Naive thymus-derived CD4-positive, alpha-beta T cell (primary cell): ENCODE measurements at regions of chr4 and their contacts with region 1.

Region 1: GRCh38 chr4:105146276-105147015 is at the start of gene TET2:
- DNase-seq: peak; percentile 66 to 85 (median 78)
- ATAC-seq: peak; percentile 89
- H3K4me3 ChIP-seq: peak within 1 kb of the TSS; percentile 97
- H3K4me3 Mint-ChIP-seq: peak within 1 kb of the TSS; percentile 95 to 100 (median 100)
- H3K27ac ChIP-seq: peak within 1 kb of the TSS; percentile 80
- H3K27ac Mint-ChIP-seq: peak within 1 kb of the TSS; percentile 92 to 100 (median 98)
- H3K4me1 ChIP-seq: peaks cover 0 to 6% of the 10 kb centered on the region in 2 donors
- H3K4me1 Mint-ChIP-seq: peaks cover 31 to 41% (median 34%) of the 10 kb centered on the region in 7 donors
- H3K27me3 ChIP-seq: no peaks in the 10 kb centered on the region
- H3K27me3 Mint-ChIP-seq: peaks cover 0 to 3% (median 0%) of the 10 kb centered on the region in 5 donors
- total RNA-seq, gene TET2: 15.2 to 78.4 (median 32.2) TPM

Region 2: DNA sequence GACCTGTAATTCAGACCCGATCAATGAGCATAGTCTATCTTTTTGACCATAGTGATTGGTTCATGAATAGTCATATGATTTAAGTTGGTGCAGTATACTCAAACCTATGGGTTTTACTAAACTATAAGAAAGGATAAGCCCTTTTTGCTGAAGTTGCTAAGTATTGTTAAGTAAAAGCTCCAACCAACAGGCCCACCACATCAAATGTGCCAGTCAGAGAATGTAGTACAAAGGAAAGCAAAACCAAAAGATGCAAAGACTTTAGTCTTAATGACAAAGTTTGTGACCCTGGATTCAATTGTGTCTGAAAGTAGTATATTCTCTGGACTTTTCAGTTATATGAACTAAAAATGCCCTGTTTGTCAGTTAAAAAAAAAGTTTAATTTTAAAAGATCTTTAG is 207.8 kb before region 1 on chr4:
- CTCF ChIA-PET with region 1: no interaction called
- POLR2A ChIA-PET with region 1: no interaction called
- intact Hi-C with region 1: loop called in 1 of 2 experiments (anchors 2 kb)
- DNase-seq: peak in 5 of 9 donors; percentile 3 to 47 (median 25)
- ATAC-seq: peak; percentile 77
- H3K4me3 ChIP-seq: no peak overlapping the region
- H3K4me3 Mint-ChIP-seq: peak overlapping the region in 1 of 10 donors; percentile 47
- H3K27ac ChIP-seq: peak overlapping the region; percentile 32
- H3K27ac Mint-ChIP-seq: peak overlapping the region in 5 of 9 donors; percentile 15 to 64 (median 25)
- H3K4me1 ChIP-seq: peaks cover 0 to 3% of the 10 kb centered on the region in 2 donors
- H3K4me1 Mint-ChIP-seq: peaks cover 0 to 17% (median 11%) of the 10 kb centered on the region in 7 donors
- H3K27me3 ChIP-seq: no peaks in the 10 kb centered on the region
- H3K27me3 Mint-ChIP-seq: peaks cover 0 to 2% (median 0%) of the 10 kb centered on the region in 5 donors

Region 3: DNA sequence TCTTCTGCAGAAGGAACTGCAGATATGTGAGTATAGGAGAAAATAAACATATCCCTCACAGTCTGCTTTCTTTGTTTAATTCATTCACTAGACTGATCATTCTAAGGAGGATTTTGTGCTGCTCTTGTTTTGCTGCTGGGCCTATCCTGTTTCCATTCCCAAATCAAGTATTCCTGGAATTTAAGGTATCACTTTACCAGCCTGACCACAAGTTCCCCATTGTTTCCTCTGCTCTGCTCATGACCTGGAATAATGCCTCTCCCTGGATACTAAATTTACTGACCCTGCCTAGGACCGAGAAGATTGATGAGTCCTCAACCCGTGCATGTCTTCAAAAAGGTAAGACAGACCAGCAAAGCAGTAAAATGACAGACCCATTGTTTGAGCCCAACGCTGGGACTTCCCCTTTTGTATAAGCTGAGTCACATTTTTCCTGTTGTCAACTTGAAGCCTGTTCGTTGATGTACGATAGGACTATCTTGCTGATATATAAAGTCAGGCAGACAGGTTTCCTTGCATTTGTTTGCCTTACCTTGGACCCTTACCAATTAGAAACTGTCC is 85.2 kb before region 1 on chr4:
- CTCF ChIA-PET with region 1: no interaction called
- POLR2A ChIA-PET with region 1: no interaction called
- intact Hi-C with region 1: loop called in 1 of 2 experiments (anchors 2 kb)
- DNase-seq: peak in 1 of 9 donors; percentile 39
- ATAC-seq: peak; percentile 49
- H3K4me3 ChIP-seq: no peak overlapping the region
- H3K4me3 Mint-ChIP-seq: peak overlapping the region in 5 of 10 donors; percentile 4 to 64 (median 34)
- H3K27ac ChIP-seq: no peak overlapping the region
- H3K27ac Mint-ChIP-seq: peak overlapping the region in 3 of 9 donors; percentile 14 to 85 (median 26)
- H3K4me1 ChIP-seq: no peaks in the 10 kb centered on the region
- H3K4me1 Mint-ChIP-seq: peaks cover 10 to 30% (median 11%) of the 10 kb centered on the region in 7 donors
- H3K27me3 ChIP-seq: no peaks in the 10 kb centered on the region
- H3K27me3 Mint-ChIP-seq: no peaks in the 10 kb centered on the region

Region 4: DNA sequence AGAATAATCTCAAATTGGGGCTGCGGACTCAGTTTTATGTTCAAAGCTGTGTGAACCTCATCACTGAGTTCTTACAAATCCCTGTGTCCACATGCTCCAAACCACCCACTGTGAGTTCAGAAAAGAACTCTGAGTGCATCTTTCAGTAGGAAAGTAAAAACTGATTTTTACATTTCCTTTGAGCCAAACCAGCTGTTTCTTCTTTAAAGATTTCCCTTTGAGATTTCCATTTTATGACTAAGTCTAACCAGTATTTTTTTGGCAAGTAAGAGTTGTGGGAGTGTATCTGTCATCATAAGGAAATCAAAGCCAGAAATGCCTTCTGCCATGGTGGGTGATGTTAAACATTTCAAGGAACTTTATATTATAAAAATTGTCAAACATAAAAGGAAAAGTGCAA is 100.3 kb after region 1 on chr4:
- CTCF ChIA-PET with region 1: no interaction called
- POLR2A ChIA-PET with region 1: no interaction called
- intact Hi-C with region 1: loop called in 1 of 2 experiments (anchors 5 kb)
- DNase-seq: no peak
- ATAC-seq: no peak
- H3K4me3 ChIP-seq: no peak overlapping the region
- H3K4me3 Mint-ChIP-seq: no peak overlapping the region
- H3K27ac ChIP-seq: no peak overlapping the region
- H3K27ac Mint-ChIP-seq: no peak overlapping the region
- H3K4me1 ChIP-seq: no peaks in the 10 kb centered on the region
- H3K4me1 Mint-ChIP-seq: peaks cover 0 to 5% (median 0%) of the 10 kb centered on the region in 7 donors
- H3K27me3 ChIP-seq: no peaks in the 10 kb centered on the region
- H3K27me3 Mint-ChIP-seq: no peaks in the 10 kb centered on the region

Region 5: DNA sequence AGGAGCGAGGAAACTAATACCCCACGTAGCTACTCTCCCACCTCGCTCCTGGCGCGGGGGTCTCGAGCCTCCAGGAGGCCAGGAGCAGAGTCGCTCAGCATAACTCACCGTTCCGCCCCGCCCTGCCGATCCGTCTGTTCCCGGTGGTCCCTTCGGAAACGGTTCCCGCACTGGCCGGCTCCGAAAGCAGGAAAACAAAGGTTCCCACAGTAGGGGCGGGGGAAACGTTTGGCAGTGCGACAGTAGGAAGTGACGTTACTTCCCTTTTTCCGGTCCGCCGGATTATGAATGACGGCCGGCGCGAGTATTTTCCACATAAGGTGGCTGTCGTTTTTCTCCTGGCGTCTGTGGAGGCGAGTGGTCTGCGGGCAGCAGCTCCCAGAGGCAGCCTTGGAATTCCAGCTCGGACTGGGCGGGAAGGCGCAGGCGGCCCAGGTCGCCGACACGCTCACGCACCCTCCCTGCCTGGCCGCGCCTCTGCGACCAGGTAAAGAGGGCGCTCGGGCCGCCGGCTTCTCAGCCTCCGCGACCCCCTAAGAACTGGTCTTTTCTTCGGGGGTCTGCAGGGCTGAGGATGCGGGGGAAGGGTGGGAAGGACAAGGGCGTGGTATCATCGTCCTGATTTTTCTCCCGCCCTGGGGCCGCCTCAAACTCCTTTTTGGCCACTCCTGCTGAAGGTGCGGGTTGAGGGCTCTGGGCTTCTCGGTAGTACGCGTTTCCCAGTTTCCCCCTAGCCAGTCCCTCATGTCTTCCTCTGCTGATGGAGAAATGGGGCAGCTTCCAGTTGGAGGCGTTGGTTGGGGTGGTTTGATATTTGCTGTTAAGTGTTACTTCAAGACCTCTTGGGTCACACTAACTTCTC is 562.3 kb after region 1 on chr4 and contains the starts of genes GSTCD and INTS12:
- CTCF ChIA-PET with region 1: no interaction called
- POLR2A ChIA-PET with region 1: no interaction called
- intact Hi-C with region 1: loop called (anchors 1 kb)
- DNase-seq: peak; percentile 73 to 88 (median 84)
- ATAC-seq: peak; percentile 98
- H3K4me3 ChIP-seq: peak within 1 kb of the TSS; percentile 92
- H3K4me3 Mint-ChIP-seq: peak within 1 kb of the TSS; percentile 94 to 100 (median 99)
- H3K27ac ChIP-seq: peak within 1 kb of the TSS; percentile 84
- H3K27ac Mint-ChIP-seq: peak within 1 kb of the TSS; percentile 92 to 100 (median 97)
- H3K4me1 ChIP-seq: peaks cover 7 to 10% of the 10 kb centered on the region in 2 donors
- H3K4me1 Mint-ChIP-seq: peaks cover 10 to 40% (median 27%) of the 10 kb centered on the region in 7 donors
- H3K27me3 ChIP-seq: no peaks in the 10 kb centered on the region
- H3K27me3 Mint-ChIP-seq: no peaks in the 10 kb centered on the region
- total RNA-seq, gene GSTCD: 5.8 to 9.2 (median 7.5) TPM
- total RNA-seq, gene INTS12: 14.8 to 20.4 (median 17.6) TPM